Activated CD4-positive, alpha-beta T cell treated with anti-CD3 and anti-CD28 coated beads, Interleukin-2, amount 10 ng/mL, durations not matched to agents 24 days and 14 days (primary cell): ENCODE measurements at regions of chr3 and their contacts with region 1.

Region 1: GRCh38 chr3:71978150-71978721 is 193.3 kb upstream of the PROK2 start:
- DNase-seq: peak; percentile 76
- H3K4me3 Mint-ChIP-seq: peak overlapping the region; percentile 59
- H3K27ac Mint-ChIP-seq: peak overlapping the region; percentile 88
- H3K4me1 Mint-ChIP-seq: peaks cover 45% of the 10 kb centered on the region
- H3K27me3 Mint-ChIP-seq: no peaks in the 10 kb centered on the region

Region 2: GRCh38 chr3:72475258-72476138 is 497.3 kb after region 1 on chr3:
- intact Hi-C with region 1: loop called (anchors 1 kb)
- DNase-seq: no peak
- H3K4me3 Mint-ChIP-seq: peak overlapping the region; percentile 45
- H3K27ac Mint-ChIP-seq: peak overlapping the region; percentile 78
- H3K4me1 Mint-ChIP-seq: peaks cover 32% of the 10 kb centered on the region
- H3K27me3 Mint-ChIP-seq: no peaks in the 10 kb centered on the region

Region 3: DNA sequence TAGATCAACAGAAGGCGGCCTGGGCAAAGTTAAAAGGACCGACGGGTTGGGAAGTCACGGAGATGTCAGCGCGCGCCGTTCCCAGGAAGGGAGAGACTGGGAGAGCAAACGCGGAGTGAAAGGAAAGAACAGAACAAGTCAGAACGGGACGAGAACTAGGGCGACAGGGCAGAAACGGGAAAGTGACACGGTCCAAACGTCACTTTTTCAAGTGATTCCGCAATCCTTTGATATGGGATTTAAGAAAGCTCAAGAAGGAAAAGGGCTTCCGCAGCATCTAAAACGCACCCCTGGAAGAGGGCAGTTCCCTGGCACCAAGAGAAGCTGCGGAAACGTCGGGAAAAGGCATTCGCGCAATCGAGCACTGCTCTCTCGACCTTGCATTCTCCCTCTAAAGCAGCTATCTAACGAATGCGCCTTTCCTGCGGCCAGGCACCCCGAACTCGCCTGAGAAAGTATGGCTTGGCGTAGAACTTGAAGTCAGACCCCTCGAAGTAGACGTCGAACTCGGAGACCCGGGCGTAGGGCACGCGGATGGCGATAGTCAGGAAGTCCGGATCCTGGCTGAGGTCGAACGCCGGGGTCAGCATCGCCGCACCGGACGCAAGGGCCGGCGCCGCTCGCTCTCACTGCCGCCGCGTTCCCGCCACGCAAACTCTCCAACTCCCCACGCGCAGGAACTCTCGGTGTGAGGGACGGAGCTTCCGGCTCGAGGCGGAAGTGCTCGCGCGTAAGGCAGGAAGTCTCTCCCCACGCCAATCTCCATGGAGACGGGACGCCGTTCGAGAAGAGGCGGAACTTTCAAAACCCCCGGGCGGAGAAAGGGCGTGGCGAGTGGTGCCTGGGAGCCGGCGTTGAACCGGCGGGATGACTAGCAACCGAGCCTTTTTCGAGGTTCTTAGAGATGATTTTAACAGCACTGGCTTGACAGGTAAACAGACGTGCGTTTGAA is 869.8 kb after region 1 on chr3 and contains the start of gene SHQ1:
- intact Hi-C with region 1: loop called (anchors 10 kb)
- DNase-seq: peak; percentile 99
- H3K4me3 Mint-ChIP-seq: peak within 1 kb of the TSS; percentile 93
- H3K27ac Mint-ChIP-seq: peak within 1 kb of the TSS; percentile 91
- H3K4me1 Mint-ChIP-seq: peaks cover 41% of the 10 kb centered on the region
- H3K27me3 Mint-ChIP-seq: no peaks in the 10 kb centered on the region
- total RNA-seq, gene SHQ1: 46.8 and 47.2 TPM in 2 replicates